ENCODE measurements at regions of chr1 and their contacts with region 1.

Region 1: GRCh38 chr1:109201123-109201703 is 12.5 kb upstream of the SARS1 start:
- DNase-seq: peak; percentile 89
- H3K27ac ChIP-seq: no peak overlapping the region
- CTCF ChIP-seq: no peak; the same call in 1 of the 2 replicates

Region 2: GRCh38 chr1:109213785-109214468 is 12.7 kb after region 1 on chr1 and contains the start of gene SARS1:
- CTCF ChIA-PET with region 1: interaction called, 12 read pairs
- POLR2A ChIA-PET with region 1: interaction called, 3 read pairs
- DNase-seq: peak; percentile 94
- H3K27ac ChIP-seq: peak within 1 kb of the TSS; percentile 92
- CTCF ChIP-seq: no peak

Region 3: GRCh38 chr1:109239580-109240095 is 38.4 kb after region 1 on chr1:
- CTCF ChIA-PET with region 1: interaction called, 5 read pairs
- POLR2A ChIA-PET with region 1: interaction called, 17 read pairs
- DNase-seq: no peak
- H3K27ac ChIP-seq: peak overlapping the region; percentile 98
- CTCF ChIP-seq: peak; percentile 21; the same call in 1 of the 2 replicates

Measured in RWPE1 (cell line).